ENCODE measurements at regions of chr22 and their contacts with region 1.

Region 1: GRCh38 chr22:17119481-17120202 is 1.5 kb downstream of the TMEM121B start:
- DNase-seq: no peak
- H3K4me3 Mint-ChIP-seq: no peak overlapping the region
- H3K27ac Mint-ChIP-seq: no peak overlapping the region
- H3K4me1 Mint-ChIP-seq: peaks cover 41% of the 10 kb centered on the region
- H3K27me3 Mint-ChIP-seq: peaks cover 32% of the 10 kb centered on the region

Region 2: GRCh38 chr22:17106785-17107546 is 12.7 kb before region 1 on chr22:
- intact Hi-C with region 1: loop called (anchors 1 kb)
- DNase-seq: no peak
- H3K4me3 Mint-ChIP-seq: peak overlapping the region; percentile 51
- H3K27ac Mint-ChIP-seq: peak overlapping the region; percentile 46
- H3K4me1 Mint-ChIP-seq: peaks cover 23% of the 10 kb centered on the region
- H3K27me3 Mint-ChIP-seq: no peaks in the 10 kb centered on the region

Region 3: DNA sequence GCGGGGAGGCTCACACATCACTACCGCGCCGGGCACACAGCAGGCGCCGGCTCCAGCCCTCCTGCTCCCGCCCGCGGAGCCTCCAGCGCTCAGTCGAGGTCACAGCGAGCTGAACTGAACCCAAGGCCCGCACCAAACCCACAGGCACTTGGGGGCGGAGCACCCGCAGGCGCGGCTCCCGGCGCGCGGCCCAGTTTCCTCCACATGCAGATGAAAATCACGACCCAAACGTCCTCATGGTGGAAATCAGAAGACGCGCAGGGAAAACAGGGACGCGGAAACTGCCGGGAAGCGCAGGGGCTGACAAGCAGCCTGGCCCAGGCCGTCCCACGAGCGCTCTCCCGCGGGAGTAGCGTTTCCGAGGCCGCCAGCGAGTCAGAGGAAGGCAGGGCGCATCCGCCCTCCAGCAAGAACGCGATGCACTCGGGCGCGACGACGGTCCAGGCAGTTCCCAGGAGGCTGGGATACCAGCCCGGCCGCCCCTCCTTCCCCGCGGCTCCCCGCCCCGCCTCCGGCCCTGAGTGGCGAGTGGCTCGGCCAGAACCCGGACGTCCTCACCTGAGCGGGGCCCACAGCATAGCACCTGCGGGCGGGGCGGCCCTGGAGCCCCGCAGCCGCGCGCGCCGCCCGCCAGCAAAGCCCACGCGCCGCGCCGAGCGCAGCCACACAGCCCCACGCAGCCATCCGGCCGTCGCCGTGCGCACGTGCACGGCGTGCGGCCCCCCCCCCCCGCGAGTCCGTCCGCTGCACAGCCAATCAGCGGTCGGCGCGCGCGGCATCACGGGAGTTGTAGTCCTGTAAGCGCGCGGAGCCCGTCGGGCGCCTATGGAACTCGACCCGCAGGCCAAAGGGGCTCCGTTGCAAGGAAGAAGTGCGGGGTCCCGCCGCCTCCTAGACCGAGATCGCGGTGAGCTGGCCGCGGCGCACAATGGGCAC is 39.2 kb after region 1 on chr22 and contains the start of gene HDHD5:
- intact Hi-C with region 1: loop called (anchors 5 kb)
- DNase-seq: peak; percentile 75
- H3K4me3 Mint-ChIP-seq: peak within 1 kb of the TSS; percentile 83
- H3K27ac Mint-ChIP-seq: peak within 1 kb of the TSS; percentile 58
- H3K4me1 Mint-ChIP-seq: peaks cover 21% of the 10 kb centered on the region
- H3K27me3 Mint-ChIP-seq: no peaks in the 10 kb centered on the region
- total RNA-seq, gene HDHD5: 44.3 and 44.8 TPM in 2 replicates

Measured in activated T-helper 2 cell treated with anti-CD3 and anti-CD28 coated beads, Interferon-gamma antibody, Interleukin-2, Interleukin-4, amounts not matched to agents 10 μg/mL and 5 μg/mL and 100 μg/mL, durations not matched to agents 14 hours and 24 hours and 36 hours (primary cell).